H1 (cell line): ENCODE measurements at regions of chr16 and their contacts with region 1.

Region 1: DNA sequence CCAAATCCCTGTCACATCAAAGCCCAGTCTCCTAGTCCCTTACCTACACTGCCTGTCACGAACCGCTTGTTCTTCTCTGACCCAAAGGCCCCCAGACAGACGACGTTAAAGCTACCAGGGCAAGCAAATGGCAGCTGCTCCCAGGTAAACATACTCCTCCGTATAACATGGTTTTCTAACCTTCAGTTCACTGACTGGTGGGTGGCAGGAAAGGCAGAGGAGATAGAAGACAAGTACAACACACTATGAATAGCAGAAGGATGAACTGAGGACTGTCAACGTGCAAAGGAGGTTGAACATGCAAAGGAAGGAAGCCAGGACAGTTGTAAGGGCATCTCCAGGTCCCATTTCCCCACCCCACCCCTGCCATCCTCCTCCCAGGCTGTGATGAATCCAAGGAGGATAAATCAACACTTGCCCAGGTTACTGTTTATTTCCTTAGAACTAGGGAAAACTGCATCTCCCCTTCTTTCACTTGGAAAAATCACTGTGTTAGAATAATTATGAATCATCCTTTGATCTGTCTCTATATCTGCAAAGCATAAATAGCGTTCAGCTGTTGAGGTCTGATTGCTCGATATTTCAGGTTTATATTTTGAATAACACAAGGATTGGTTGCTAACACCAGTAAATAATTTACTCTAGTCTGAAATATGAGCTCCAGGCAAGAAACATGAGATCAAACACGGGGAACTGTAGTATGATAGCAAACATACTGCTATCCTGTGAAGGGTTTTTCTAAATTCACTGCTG is 450.0 kb downstream of the SHISA9 start:
- DNase-seq: no peak
- H3K4me3 ChIP-seq: no peak overlapping the region
- H3K27ac ChIP-seq: 0 out of 2 replicates have a peak overlapping the region, but pooled peaks have one; percentile 66
- H3K4me1 ChIP-seq: peaks cover 3 to 11% (median 10%) of the 10 kb centered on the region in 4 experiments; a peak in 5 of 7 replicates
- H3K27me3 ChIP-seq: no peaks in the 10 kb centered on the region
- CTCF ChIP-seq: no peak
- EP300 ChIP-seq: no peak
- POLR2A ChIP-seq: peak in 1 of 2 experiments; percentile 55; a peak in 1 of 3 replicates
- RAD21 ChIP-seq: no peak

Region 2: GRCh38 chr16:12901597-12902461 is 449.5 kb before region 1 on chr16 and contains the start of gene SHISA9:
- CTCF ChIA-PET with region 1: interaction called, 4 read pairs
- POLR2A ChIA-PET with region 1: interaction called, 10 read pairs
- DNase-seq: peak in 1 of 2 experiments; percentile 79
- H3K4me3 ChIP-seq: peak within 1 kb of the TSS; percentile 82 to 97 (median 94)
- H3K27ac ChIP-seq: no peak within 1 kb of the TSS
- H3K4me1 ChIP-seq: peaks cover 9 to 17% (median 12%) of the 10 kb centered on the region in 4 experiments
- H3K27me3 ChIP-seq: peaks cover 0 to 2% (median 0%) of the 10 kb centered on the region in 4 experiments; a peak in 3 of 7 replicates
- CTCF ChIP-seq: no peak
- EP300 ChIP-seq: no peak
- POLR2A ChIP-seq: no peak; a peak in 1 of 3 replicates
- RAD21 ChIP-seq: no peak
- total RNA-seq, gene SHISA9: 39.8 and 41.9 TPM in 2 replicates

Region 3: GRCh38 chr16:13315642-13316407 is 35.5 kb before region 1 on chr16:
- CTCF ChIA-PET with region 1: no interaction called
- POLR2A ChIA-PET with region 1: no interaction called
- DNase-seq: no peak
- H3K4me3 ChIP-seq: no peak overlapping the region
- H3K27ac ChIP-seq: no peak overlapping the region
- H3K4me1 ChIP-seq: no peaks in the 10 kb centered on the region; a peak in 1 of 7 replicates
- H3K27me3 ChIP-seq: peaks cover 0 to 2% (median 0%) of the 10 kb centered on the region in 4 experiments; a peak in 1 of 7 replicates
- CTCF ChIP-seq: no peak
- EP300 ChIP-seq: no peak
- POLR2A ChIP-seq: no peak
- RAD21 ChIP-seq: no peak

Region 4: DNA sequence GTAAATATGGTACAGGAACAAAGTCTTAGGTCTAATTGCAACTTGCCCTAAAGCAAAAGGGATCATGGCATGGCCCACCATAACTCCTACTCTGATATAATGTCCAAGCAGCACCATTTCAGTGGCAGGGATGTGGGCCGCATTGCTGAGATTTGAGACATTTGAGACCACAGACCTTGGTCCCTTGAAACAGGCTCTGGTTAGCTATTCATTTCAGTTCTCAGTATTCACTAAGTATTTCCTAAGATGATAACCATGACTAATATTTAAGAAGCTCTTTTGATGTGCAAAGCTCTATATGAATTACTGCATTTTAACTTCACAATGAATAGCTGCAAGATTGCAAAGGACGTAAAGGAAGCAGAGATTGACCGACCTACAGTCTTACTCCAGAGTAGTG is 21.1 kb after region 1 on chr16:
- CTCF ChIA-PET with region 1: interaction called, 4 read pairs
- POLR2A ChIA-PET with region 1: interaction called, 10 read pairs
- DNase-seq: no peak
- H3K4me3 ChIP-seq: no peak overlapping the region
- H3K27ac ChIP-seq: no peak overlapping the region
- H3K4me1 ChIP-seq: peaks cover 2 to 6% (median 4%) of the 10 kb centered on the region in 4 experiments; a peak in 6 of 7 replicates
- H3K27me3 ChIP-seq: no peaks in the 10 kb centered on the region
- CTCF ChIP-seq: no peak
- EP300 ChIP-seq: no peak
- POLR2A ChIP-seq: no peak
- RAD21 ChIP-seq: no peak